Activated CD4-positive, alpha-beta T cell treated with anti-CD3 and anti-CD28 coated beads for 36 hours (primary cell): ENCODE measurements at regions of chr19 and their contacts with region 1.

Region 1: GRCh38 chr19:33778089-33778791 is 18.4 kb upstream of the KCTD15 start:
- DNase-seq: peak; percentile 92
- ATAC-seq: peak; percentile 98
- H3K4me3 Mint-ChIP-seq: no peak overlapping the region
- H3K27ac Mint-ChIP-seq: no peak overlapping the region
- H3K4me1 Mint-ChIP-seq: peaks cover 3% of the 10 kb centered on the region
- H3K27me3 Mint-ChIP-seq: peaks cover 25% of the 10 kb centered on the region

Region 2: DNA sequence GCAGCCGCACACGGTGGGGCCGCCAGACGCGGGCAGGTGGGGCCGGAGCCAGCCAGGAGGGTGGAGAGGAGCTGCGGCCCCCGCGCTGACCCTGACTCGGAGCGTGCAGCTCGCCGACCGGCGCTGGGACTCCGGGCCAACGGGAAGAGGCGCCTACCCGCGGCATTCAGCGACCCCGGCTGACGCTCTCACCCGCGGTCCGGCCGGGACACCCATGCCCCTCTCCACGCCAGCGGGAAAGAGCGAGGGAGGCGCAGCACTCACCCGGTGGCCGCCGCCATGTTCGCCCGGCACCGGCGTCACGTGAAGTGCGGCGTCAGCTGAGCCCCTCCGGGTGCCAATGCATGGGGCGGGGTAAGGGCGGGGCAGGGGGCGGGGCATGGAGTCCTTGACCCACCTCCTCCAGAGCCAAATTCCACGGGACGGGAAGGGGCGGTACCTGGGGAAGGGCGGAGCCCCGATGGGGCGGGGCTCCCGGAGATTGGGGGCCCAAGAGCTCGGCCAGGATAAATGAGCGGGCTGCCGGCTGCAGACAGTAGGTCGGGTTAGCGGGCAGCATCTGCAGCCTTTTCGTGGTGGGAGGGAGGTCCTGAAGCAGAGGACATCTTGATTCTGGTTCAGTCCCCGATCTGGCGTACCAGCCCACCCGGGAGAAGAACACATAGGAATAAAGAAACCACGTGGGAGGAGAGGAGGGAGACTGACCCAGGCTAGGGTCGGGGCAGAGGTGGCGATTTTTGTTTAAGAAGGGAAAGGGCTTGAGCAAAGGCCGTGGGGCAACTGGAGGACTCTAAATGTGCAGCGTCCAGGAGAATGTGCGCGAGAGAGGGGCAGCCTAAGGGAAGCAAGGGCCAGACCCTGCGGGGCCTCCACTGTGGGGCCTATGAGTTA is 256.5 kb before region 1 on chr19 and contains the start of gene PEPD:
- CTCF ChIA-PET with region 1: interaction called, 6 read pairs
- POLR2A ChIA-PET with region 1: no interaction called
- intact Hi-C with region 1: loop called in 1 of 2 experiments (anchors 1 kb)
- DNase-seq: peak; percentile 95
- ATAC-seq: peak; percentile 97
- H3K4me3 Mint-ChIP-seq: peak within 1 kb of the TSS; percentile 89
- H3K27ac Mint-ChIP-seq: peak within 1 kb of the TSS; percentile 60
- H3K4me1 Mint-ChIP-seq: peaks cover 20% of the 10 kb centered on the region
- H3K27me3 Mint-ChIP-seq: no peaks in the 10 kb centered on the region
- total RNA-seq, gene PEPD: 26.9 to 37.4 TPM

Region 3: DNA sequence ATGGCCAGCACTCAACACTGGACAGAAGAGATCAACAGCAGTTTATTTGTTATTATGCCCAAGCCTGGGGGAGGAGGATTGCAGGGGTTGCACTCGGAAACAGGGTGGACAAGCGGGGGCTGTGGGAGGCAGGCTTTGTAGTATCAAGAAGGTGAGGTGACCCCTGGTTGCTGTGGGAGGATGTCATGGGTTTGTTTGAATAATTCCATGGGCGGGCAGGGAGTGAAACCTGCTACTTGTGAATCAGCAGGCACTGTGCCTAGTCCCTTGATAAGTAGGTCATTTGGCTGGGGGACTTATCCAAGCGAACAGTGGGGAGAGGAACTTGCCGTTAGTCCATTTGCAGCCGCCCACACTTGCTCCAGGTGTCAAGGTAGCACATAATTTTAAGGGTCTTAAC is 66.0 kb before region 1 on chr19:
- CTCF ChIA-PET with region 1: no interaction called
- POLR2A ChIA-PET with region 1: no interaction called
- intact Hi-C with region 1: no loop called
- DNase-seq: no peak
- ATAC-seq: no peak
- H3K4me3 Mint-ChIP-seq: no peak overlapping the region
- H3K27ac Mint-ChIP-seq: no peak overlapping the region
- H3K4me1 Mint-ChIP-seq: no peaks in the 10 kb centered on the region
- H3K27me3 Mint-ChIP-seq: peaks cover 9% of the 10 kb centered on the region

Region 4: DNA sequence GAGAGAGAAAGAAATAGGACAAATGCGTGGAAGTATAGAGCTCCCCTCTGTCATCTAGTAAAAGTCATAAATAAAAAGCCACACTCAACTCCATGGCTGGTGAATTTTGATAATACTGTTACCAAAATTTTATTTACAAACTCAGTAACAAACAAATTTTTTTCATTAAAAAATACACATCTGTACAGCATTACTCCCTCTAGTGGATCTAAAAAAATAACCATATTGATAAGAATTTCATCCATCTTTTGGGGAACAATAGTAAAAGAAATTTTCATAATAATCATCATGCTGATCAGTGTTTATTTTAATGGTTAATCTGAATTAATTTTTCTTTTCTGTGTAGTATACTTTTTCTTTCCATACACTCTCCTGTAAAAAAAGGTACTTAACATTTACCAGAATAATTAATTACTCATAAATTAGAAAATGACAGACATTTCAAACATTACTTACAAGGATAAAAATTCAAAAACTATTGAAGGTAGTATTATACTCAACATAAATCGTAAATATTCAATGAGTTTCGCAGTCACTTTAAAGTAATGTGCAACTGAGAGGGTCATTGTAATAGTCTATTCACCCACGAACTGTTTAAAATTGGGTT is 220.6 kb after region 1 on chr19:
- CTCF ChIA-PET with region 1: interaction called, 21 read pairs
- POLR2A ChIA-PET with region 1: no interaction called
- intact Hi-C with region 1: loop called (anchors 1 kb)
- DNase-seq: no peak
- ATAC-seq: no peak
- H3K4me3 Mint-ChIP-seq: no peak overlapping the region
- H3K27ac Mint-ChIP-seq: no peak overlapping the region
- H3K4me1 Mint-ChIP-seq: no peaks in the 10 kb centered on the region
- H3K27me3 Mint-ChIP-seq: peaks cover 23% of the 10 kb centered on the region

Region 5: DNA sequence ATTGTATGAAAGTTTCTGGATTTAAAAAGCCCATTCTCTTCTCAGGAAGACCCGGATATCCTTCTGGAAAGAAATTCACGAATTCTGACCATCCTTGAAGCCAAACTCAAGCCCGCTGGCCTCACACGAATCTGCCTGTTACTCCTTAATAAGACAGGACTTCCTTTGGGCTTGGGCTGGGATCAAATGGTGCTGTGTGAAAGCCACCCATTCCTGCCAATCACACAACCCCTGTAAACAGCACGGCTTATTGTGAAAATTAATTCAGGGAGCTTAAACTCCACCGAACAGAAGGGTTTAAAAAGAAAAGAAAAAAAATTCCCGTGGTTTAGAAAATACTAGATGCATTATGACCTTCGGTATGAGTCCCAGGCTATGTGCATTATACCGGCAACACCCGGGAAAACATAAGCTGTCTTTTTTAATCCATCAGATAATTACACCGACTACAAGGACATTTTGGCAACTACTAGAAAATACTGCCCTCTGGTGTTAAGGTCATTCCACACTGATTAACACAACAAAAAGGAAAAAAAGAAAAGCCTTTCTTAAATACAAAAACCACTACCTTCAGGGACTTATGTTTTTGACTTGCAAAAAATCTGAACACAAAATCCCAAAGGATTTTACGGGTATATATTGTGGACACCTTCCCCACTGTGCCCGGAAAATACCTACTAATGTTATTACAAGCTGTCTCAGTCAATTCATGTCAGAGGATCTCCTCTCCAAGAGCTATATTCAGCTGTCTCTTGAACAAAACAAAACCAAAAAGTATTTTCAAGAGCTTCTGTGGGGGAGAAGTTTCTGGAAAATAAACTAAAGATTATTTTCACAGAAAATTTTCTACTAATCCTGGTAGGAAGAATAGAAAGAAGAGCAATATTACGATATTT is 318.0 kb after region 1 on chr19:
- CTCF ChIA-PET with region 1: interaction called, 43 read pairs
- POLR2A ChIA-PET with region 1: no interaction called
- intact Hi-C with region 1: loop called (anchors 1 kb)
- DNase-seq: no peak
- ATAC-seq: no peak
- H3K4me3 Mint-ChIP-seq: no peak overlapping the region
- H3K27ac Mint-ChIP-seq: no peak overlapping the region
- H3K4me1 Mint-ChIP-seq: no peaks in the 10 kb centered on the region
- H3K27me3 Mint-ChIP-seq: peaks cover 8% of the 10 kb centered on the region

Region 6: GRCh38 chr19:34712395-34713261 is 934.4 kb after region 1 on chr19:
- CTCF ChIA-PET with region 1: no interaction called
- POLR2A ChIA-PET with region 1: no interaction called
- intact Hi-C with region 1: loop called in 1 of 2 experiments (anchors 2 kb)
- DNase-seq: peak; percentile 64
- ATAC-seq: peak; percentile 70
- H3K4me3 Mint-ChIP-seq: no peak overlapping the region
- H3K27ac Mint-ChIP-seq: no peak overlapping the region
- H3K4me1 Mint-ChIP-seq: no peaks in the 10 kb centered on the region
- H3K27me3 Mint-ChIP-seq: peaks cover 24% of the 10 kb centered on the region